PC-3 (cell line): ENCODE measurements at regions of chr10 and their contacts with region 1.

Region 1: GRCh38 chr10:73908853-73909538 is 1.9 kb upstream of the PLAU start:
- DNase-seq: peak; percentile 100
- ATAC-seq: peak; percentile 37
- H3K4me3 ChIP-seq: peak overlapping the region; percentile 68
- H3K27ac ChIP-seq: peak overlapping the region; percentile 78
- H3K4me1 ChIP-seq: peaks cover 88% of the 10 kb centered on the region
- H3K27me3 ChIP-seq: no peaks in the 10 kb centered on the region
- CTCF ChIP-seq: no peak

Region 2: GRCh38 chr10:73772280-73773151 is 136.5 kb before region 1 on chr10:
- CTCF ChIA-PET with region 1: no interaction called
- POLR2A ChIA-PET with region 1: no interaction called
- intact Hi-C with region 1: no loop called
- DNase-seq: peak; percentile 99
- ATAC-seq: peak; percentile 66
- H3K4me3 ChIP-seq: peak overlapping the region; percentile 73
- H3K27ac ChIP-seq: peak overlapping the region; percentile 71
- H3K4me1 ChIP-seq: peaks cover 26% of the 10 kb centered on the region
- H3K27me3 ChIP-seq: no peaks in the 10 kb centered on the region
- CTCF ChIP-seq: peak; percentile 53

Region 3: DNA sequence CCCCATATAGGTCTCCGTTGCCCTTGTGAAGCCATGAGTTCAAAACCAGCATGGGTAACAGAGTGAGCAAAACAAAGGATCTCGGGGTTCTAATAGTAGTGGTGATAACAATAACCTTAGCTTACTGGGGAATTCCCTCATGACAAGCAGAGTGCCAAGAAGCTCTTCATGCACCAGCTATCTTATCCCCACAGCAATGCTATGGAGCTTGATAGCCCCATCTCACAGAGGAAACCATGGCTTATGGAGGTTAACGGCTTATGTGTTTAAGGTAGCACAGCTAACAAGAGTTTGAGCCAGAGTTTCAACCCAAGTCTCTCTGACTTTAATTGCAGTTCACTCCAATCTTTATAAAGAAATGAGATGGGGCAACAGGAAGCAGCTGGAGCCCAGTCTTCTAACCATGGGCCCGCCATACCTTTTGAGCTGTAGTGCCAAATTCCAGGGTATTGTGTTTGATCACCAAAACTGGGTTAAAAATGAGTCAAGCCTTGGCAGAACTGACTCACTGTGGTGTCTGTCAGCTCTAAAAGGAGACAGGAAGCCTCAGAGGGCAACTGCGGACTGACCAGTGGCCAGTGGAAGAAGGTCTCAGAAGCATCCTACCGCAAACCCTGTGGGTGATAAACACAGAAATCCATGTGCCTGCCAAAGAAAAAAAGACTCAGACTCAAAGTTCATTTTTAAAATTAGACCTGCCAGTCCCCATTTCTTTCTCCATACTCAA is 14.6 kb before region 1 on chr10:
- CTCF ChIA-PET with region 1: interaction called, 90 read pairs
- POLR2A ChIA-PET with region 1: interaction called, 182 read pairs
- intact Hi-C with region 1: loop called (anchors 1 kb)
- DNase-seq: peak; percentile 100
- ATAC-seq: peak; percentile 67
- H3K4me3 ChIP-seq: no peak overlapping the region
- H3K27ac ChIP-seq: peak overlapping the region; percentile 60
- H3K4me1 ChIP-seq: peaks cover 76% of the 10 kb centered on the region
- H3K27me3 ChIP-seq: no peaks in the 10 kb centered on the region
- CTCF ChIP-seq: no peak

Region 4: DNA sequence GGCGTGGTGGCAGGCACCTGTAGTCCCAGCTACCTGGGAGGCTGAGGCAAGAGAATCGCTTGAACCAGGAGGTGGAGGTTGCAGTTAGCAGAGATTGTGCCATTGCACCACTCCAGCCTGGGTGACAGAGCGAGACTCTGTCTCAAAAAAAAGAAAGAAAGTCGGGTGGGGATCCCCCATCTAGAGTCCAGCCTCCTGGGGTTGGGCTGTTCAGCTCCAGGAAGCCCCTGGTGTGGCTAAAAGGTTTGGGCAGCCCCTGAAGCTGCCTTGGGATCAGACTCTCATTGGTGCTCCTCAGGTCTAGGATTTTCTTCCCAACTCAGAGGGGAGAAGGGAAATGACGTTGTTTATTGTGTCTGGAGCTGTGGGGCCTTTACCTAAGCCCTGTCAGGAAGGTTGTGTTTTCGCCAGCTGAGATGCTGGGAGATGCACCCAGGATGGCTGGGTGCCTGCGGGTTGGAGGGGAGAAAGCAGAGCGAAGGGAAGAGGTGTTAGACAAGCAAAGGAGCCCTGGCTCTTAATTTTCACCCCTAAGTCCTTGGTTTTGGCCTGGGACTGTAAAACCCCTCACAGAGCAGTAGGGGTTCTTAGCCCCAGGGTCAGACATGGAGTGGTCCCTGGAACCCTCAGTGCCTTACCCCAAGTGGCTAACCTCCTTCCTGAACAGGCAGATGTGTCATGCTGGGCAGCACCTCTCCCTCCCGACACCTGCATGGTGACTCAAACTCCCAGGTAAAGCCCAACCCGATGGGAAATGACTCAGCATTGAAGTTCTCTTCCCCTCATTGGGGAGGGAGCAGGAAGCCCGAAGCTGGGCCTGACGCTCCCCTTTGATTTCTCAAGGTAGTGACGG is 23.0 kb after region 1 on chr10:
- CTCF ChIA-PET with region 1: interaction called, 3 read pairs
- POLR2A ChIA-PET with region 1: interaction called, 3 read pairs
- intact Hi-C with region 1: loop called (anchors 1 kb)
- DNase-seq: peak; percentile 100
- ATAC-seq: peak; percentile 96
- H3K4me3 ChIP-seq: peak overlapping the region; percentile 3; the same call in 1 of the 2 replicates
- H3K27ac ChIP-seq: peak overlapping the region; percentile 82
- H3K4me1 ChIP-seq: peaks cover 18% of the 10 kb centered on the region
- H3K27me3 ChIP-seq: no peaks in the 10 kb centered on the region
- CTCF ChIP-seq: no peak

Region 5: GRCh38 chr10:73965890-73966768 is 57.1 kb after region 1 on chr10:
- CTCF ChIA-PET with region 1: no interaction called
- POLR2A ChIA-PET with region 1: interaction called, 4 read pairs
- intact Hi-C with region 1: loop called (anchors 2 kb)
- DNase-seq: peak; percentile 100
- ATAC-seq: peak; percentile 98
- H3K4me3 ChIP-seq: peak overlapping the region; percentile 6
- H3K27ac ChIP-seq: peak overlapping the region; percentile 73
- H3K4me1 ChIP-seq: peaks cover 27% of the 10 kb centered on the region
- H3K27me3 ChIP-seq: no peaks in the 10 kb centered on the region
- CTCF ChIP-seq: no peak